Heart left ventricle (tissue), 16 donors: ENCODE measurements at regions of chr7 and their contacts with region 1.

Region 1: DNA sequence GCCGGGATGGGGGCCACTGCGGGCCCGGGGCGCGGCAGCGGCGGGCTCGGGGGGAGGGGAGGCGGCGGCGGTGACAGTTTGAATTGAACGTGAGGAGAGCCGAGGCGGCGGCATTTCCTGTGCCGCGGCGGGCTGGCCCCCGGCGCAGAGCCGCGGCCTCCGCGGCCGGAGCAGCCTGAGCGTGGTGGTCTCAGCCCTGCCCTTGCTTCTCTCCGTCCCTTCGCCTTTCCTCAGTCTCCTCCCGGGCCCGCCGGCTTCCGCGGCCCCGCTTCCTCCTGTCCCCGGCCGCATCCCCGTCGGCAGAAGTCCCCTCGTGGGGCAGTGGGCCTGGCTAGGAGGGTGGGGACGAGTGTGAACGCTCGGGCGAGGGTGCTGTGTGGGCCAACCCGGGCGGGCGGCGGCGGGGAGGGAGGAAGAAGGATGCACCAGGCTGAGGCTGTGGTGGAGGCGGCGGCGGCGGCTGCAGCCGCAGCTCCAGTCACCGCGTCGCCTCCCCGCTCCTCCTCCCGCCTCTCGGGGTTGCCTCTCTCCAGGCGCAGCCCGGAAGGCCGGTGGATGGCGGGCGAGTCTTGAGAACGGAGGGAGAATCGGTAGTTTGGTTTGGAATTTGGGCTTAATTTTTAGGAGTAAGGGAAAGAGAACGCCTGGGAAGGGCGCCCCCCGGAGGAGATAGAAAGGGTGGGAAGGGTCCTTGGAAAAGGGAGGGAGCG is 690 bp downstream of the SEPTIN7 start:
- DNase-seq: peak; percentile 74 to 87 (median 76)
- ATAC-seq: peak in 3 of 4 donors; percentile 23 to 65 (median 59)
- H3K4me3 ChIP-seq: peak overlapping the region; percentile 58 to 95 (median 88)
- H3K27ac ChIP-seq: peak overlapping the region; percentile 90 to 99 (median 97)
- H3K4me1 ChIP-seq: peaks cover 0 to 58% (median 36%) of the 10 kb centered on the region in 12 donors
- H3K27me3 ChIP-seq: no peaks in the 10 kb centered on the region
- CTCF ChIP-seq: peak; percentile 46 to 79 (median 64)
- POLR2A ChIP-seq: no peak

Region 2: GRCh38 chr7:35707422-35707821 is 94.1 kb before region 1 on chr7:
- intact Hi-C with region 1: loop called in 6 of 10 experiments (anchors 2 to 5 kb)
- DNase-seq: no peak
- ATAC-seq: no peak
- H3K4me3 ChIP-seq: no peak overlapping the region
- H3K27ac ChIP-seq: no peak overlapping the region
- H3K4me1 ChIP-seq: peaks cover 0 to 10% (median 0%) of the 10 kb centered on the region in 12 donors
- H3K27me3 ChIP-seq: no peaks in the 10 kb centered on the region
- CTCF ChIP-seq: no peak
- POLR2A ChIP-seq: no peak

Region 3: DNA sequence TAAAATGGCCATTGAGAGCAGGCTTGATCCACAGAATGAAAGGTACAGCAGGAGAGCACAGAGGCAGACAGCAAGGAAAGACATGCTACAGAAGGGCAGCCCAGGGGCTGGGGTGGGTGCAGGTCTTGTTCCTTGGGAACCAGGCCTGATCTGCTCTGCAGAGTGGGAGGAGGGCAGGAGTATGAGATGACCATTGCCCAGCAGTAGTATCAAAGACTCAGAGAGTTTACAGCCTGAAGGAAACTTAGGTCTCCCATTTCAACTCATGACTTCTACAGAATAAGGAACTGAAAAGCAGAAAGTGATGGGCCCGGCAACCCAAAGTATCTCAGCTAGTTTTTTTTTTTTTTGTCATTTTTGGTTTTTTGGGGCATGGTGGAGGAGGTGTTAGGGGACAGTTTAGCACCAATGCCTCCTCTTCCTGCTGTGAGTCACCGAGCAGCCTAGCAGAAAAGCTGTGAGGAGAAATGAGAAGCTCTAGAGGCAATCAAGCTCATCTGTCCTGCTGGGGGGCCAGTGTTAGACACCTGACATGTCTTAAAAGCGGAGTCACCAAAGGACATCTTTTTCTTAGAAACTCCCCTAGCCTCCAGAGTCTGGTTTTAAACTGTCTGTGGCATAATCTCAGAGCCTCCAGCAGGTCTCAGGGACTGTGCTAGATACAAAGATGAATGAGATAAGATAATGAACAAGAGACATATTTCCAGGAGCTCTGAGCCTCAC is 72.3 kb before region 1 on chr7:
- intact Hi-C with region 1: loop called in 3 of 10 experiments (anchors 2 to 5 kb)
- DNase-seq: no peak
- ATAC-seq: peak in 2 of 4 donors; percentile 45 to 49
- H3K4me3 ChIP-seq: no peak overlapping the region
- H3K27ac ChIP-seq: peak overlapping the region; percentile 50 to 92 (median 84)
- H3K4me1 ChIP-seq: peaks cover 0 to 45% (median 28%) of the 10 kb centered on the region in 12 donors
- H3K27me3 ChIP-seq: no peaks in the 10 kb centered on the region
- CTCF ChIP-seq: no peak
- POLR2A ChIP-seq: no peak

Region 4: GRCh38 chr7:35761871-35762677 is 39.5 kb before region 1 on chr7:
- intact Hi-C with region 1: loop called in 3 of 10 experiments (anchors 5 to 10 kb)
- DNase-seq: no peak
- ATAC-seq: peak in 3 of 4 donors; percentile 51 to 65 (median 54)
- H3K4me3 ChIP-seq: no peak overlapping the region
- H3K27ac ChIP-seq: peak overlapping the region in 10 of 12 donors; percentile 27 to 74 (median 53)
- H3K4me1 ChIP-seq: peaks cover 0 to 50% (median 16%) of the 10 kb centered on the region in 12 donors
- H3K27me3 ChIP-seq: no peaks in the 10 kb centered on the region
- CTCF ChIP-seq: no peak
- POLR2A ChIP-seq: no peak

Region 5: DNA sequence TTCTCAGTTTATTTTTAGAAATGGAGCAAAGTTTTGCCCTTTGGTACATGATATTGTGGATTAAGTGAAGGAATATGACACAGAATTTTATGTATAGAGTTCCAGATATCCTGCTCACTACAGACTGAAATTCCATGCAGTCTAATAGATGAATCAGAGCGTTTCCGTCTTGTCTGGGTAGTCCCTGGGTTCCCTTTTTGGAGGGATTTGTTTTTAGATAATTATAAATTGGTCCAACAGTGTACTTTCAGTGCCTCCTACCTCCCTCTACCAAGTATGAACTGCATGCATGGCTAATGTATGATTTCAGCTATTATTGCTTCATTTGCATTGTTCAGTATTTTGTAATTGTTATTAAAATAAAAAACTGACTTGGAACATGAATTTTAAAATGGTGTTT is 73.7 kb after region 1 on chr7:
- intact Hi-C with region 1: loop called in 2 of 10 experiments (anchors 5 to 10 kb)
- DNase-seq: no peak
- ATAC-seq: peak in 2 of 4 donors; percentile 39 to 65
- H3K4me3 ChIP-seq: no peak overlapping the region
- H3K27ac ChIP-seq: peak overlapping the region in 5 of 12 donors; percentile 2 to 59 (median 17)
- H3K4me1 ChIP-seq: peaks cover 0 to 48% (median 23%) of the 10 kb centered on the region in 12 donors
- H3K27me3 ChIP-seq: no peaks in the 10 kb centered on the region
- CTCF ChIP-seq: no peak
- POLR2A ChIP-seq: no peak